ENCODE measurements at regions of chr17 and their contacts with region 1.

Region 1: DNA sequence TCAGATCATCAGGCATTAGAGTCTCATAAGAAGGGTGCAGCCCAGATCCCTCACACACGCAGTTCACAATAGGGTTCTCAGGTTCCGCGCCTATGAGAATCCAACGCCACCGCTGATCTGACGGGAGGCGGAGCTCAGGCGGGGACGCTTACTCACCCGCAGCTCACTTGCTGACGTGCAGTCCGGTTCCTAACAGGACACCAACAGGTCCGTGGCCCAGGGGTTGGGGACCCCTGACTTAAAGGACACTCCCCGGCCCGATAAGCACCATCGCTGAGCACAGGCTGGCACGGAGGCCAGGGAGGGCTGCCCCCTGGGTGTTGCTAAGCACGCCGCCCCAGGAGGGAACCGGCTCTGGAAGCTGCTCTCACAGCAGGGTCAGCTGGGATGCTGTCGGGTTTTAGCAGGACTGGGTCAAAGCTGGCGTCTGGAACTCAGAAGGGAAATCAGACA is 30.1 kb upstream of the BAHCC1 start:
- DNase-seq: no peak
- H3K4me3 ChIP-seq: no peak overlapping the region
- H3K4me3 Mint-ChIP-seq: no peak overlapping the region
- H3K27ac Mint-ChIP-seq: no peak overlapping the region
- H3K4me1 ChIP-seq: peaks cover 24% of the 10 kb centered on the region
- H3K4me1 Mint-ChIP-seq: peaks cover 19% of the 10 kb centered on the region
- H3K27me3 ChIP-seq: no peaks in the 10 kb centered on the region
- H3K27me3 Mint-ChIP-seq: no peaks in the 10 kb centered on the region
- CTCF ChIP-seq: no peak

Region 2: GRCh38 chr17:81222906-81223761 is 142.0 kb before region 1 on chr17 and contains the start of gene CEP131:
- CTCF ChIA-PET with region 1: no interaction called
- POLR2A ChIA-PET with region 1: no interaction called
- intact Hi-C with region 1: no loop called
- DNase-seq: peak; percentile 99 to 100
- H3K4me3 ChIP-seq: peak within 1 kb of the TSS; percentile 95
- H3K4me3 Mint-ChIP-seq: peak within 1 kb of the TSS; percentile 80
- H3K27ac Mint-ChIP-seq: peak within 1 kb of the TSS; percentile 90
- H3K4me1 ChIP-seq: peaks cover 9% of the 10 kb centered on the region
- H3K4me1 Mint-ChIP-seq: no peaks in the 10 kb centered on the region
- H3K27me3 ChIP-seq: no peaks in the 10 kb centered on the region
- H3K27me3 Mint-ChIP-seq: no peaks in the 10 kb centered on the region
- CTCF ChIP-seq: no peak
- total RNA-seq, gene CEP131: 28.4 and 29.4 TPM in 2 replicates

Region 3: DNA sequence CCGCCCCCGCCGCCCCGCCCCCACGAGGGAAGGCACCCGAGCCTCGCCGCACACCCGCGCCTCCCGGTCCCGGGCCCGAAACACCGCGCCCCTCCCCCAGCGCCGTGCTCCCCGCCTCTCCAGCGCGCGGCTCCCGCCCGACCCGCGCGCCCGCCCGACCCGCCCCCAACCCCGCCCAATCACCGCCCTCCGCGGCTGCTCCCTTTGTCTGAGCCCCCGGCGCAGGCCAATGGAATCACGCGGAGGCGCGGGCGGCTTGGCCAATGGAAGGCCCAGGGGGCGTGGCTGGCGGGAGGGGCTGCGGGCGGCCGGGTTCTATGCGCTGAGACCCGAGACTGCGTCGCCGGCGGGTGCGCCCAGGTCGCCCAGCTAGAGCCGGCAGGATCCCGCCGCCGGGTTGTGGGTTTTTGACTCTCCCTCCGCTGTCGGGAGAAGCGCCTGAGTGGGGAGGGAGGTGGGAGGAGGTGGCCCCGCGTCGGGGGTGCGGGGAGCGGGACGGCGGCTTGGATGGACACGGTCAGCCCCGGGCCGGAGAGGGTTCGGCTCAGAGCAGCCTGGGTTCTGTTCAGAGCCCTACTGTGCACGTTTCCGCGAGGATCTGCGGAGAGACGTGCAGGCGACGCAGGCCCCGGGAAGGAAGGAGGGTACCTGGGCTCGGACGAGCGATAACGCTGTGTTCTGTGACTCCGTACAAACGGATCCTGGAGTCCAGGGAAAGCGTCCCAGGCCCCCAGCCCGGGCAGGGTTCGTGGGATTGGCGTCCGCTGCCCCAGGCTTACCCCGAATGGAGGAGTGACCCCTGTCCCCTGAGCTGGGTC is 18.9 kb before region 1 on chr17:
- CTCF ChIA-PET with region 1: interaction called, 3 read pairs
- POLR2A ChIA-PET with region 1: interaction called, 9 read pairs
- intact Hi-C with region 1: loop called (anchors 1 kb)
- DNase-seq: peak; percentile 98 to 100
- H3K4me3 ChIP-seq: peak overlapping the region; percentile 91
- H3K4me3 Mint-ChIP-seq: peak overlapping the region; percentile 85
- H3K27ac Mint-ChIP-seq: peak overlapping the region; percentile 90
- H3K4me1 ChIP-seq: peaks cover 12% of the 10 kb centered on the region
- H3K4me1 Mint-ChIP-seq: peaks cover 18% of the 10 kb centered on the region
- H3K27me3 ChIP-seq: no peaks in the 10 kb centered on the region
- H3K27me3 Mint-ChIP-seq: no peaks in the 10 kb centered on the region
- CTCF ChIP-seq: no peak

Measured in Caco-2 (cell line).